A673 (cell line): ENCODE measurements at regions of chr12 and their contacts with region 1.

Region 1: GRCh38 chr12:20232931-20233675 is 135.2 kb upstream of the PDE3A start:
- DNase-seq: no peak
- H3K4me3 ChIP-seq: no peak overlapping the region
- H3K27ac ChIP-seq: no peak overlapping the region
- H3K4me1 ChIP-seq: no peaks in the 10 kb centered on the region
- H3K27me3 ChIP-seq: no peaks in the 10 kb centered on the region
- CTCF ChIP-seq: no peak

Region 2: DNA sequence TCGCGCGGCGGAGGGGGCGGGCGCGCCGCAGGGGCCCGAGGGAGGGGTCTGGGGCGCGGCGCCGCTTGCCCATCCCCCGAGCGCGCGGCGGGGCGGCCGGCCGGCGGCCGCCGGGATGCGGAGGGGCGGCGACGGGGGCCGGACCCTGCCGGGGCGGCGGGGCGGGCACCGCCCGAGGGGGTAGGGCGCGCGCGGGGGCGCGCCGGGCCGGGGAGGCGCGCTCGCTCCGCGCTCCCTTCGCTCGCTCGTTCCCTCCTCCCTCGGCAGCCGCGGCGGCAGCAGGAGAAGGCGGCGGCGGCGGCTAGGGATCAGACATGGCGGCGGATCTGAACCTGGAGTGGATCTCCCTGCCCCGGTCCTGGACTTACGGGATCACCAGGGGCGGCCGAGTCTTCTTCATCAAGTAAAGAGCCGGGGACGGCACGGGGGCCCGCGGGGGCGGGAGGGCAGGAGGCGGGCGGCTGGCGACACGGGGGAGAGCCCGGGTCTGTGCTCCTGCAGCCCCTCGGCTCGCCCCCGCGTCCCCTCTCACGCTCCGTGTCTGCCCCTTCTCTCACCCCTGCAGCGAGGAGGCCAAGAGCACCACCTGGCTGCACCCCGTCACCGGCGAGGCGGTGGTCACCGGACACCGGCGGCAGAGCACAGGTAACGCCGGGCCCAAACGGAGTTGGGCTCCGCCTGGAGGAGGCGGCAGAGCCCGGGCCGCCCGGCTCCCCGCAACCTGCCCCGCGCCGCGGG is 1103.4 kb before region 1 on chr12 and contains the start of gene PLEKHA5:
- CTCF ChIA-PET with region 1: no interaction called
- POLR2A ChIA-PET with region 1: interaction called, 19 read pairs
- intact Hi-C with region 1: no loop called
- DNase-seq: peak; percentile 81
- H3K4me3 ChIP-seq: peak within 1 kb of the TSS; percentile 88
- H3K27ac ChIP-seq: peak within 1 kb of the TSS; percentile 71
- H3K4me1 ChIP-seq: peaks cover 8% of the 10 kb centered on the region
- H3K27me3 ChIP-seq: no peaks in the 10 kb centered on the region
- CTCF ChIP-seq: no peak
- total RNA-seq, gene PLEKHA5: 14.0 and 17.7 TPM in 2 replicates

Region 3: GRCh38 chr12:20260851-20261250 is 27.7 kb after region 1 on chr12:
- CTCF ChIA-PET with region 1: no interaction called
- POLR2A ChIA-PET with region 1: no interaction called
- intact Hi-C with region 1: no loop called
- DNase-seq: peak; percentile 15
- H3K4me3 ChIP-seq: no peak overlapping the region
- H3K27ac ChIP-seq: no peak overlapping the region
- H3K4me1 ChIP-seq: peaks cover 8% of the 10 kb centered on the region
- H3K27me3 ChIP-seq: no peaks in the 10 kb centered on the region
- CTCF ChIP-seq: no peak